ENCODE measurements at regions of chr16 and their contacts with region 1.

Region 1: GRCh38 chr16:18853694-18854093 is 52.3 kb upstream of the ARL6IP1 start:
- DNase-seq: no peak
- ATAC-seq: no peak
- H3K4me3 ChIP-seq: no peak overlapping the region
- H3K27ac ChIP-seq: peak overlapping the region in 2 of 4 donors; percentile 42 to 63
- H3K4me1 ChIP-seq: peaks cover 0 to 7% of the 10 kb centered on the region in 2 donors
- H3K27me3 ChIP-seq: no peaks in the 10 kb centered on the region
- CTCF ChIP-seq: no peak
- POLR2A ChIP-seq: no peak

Region 2: DNA sequence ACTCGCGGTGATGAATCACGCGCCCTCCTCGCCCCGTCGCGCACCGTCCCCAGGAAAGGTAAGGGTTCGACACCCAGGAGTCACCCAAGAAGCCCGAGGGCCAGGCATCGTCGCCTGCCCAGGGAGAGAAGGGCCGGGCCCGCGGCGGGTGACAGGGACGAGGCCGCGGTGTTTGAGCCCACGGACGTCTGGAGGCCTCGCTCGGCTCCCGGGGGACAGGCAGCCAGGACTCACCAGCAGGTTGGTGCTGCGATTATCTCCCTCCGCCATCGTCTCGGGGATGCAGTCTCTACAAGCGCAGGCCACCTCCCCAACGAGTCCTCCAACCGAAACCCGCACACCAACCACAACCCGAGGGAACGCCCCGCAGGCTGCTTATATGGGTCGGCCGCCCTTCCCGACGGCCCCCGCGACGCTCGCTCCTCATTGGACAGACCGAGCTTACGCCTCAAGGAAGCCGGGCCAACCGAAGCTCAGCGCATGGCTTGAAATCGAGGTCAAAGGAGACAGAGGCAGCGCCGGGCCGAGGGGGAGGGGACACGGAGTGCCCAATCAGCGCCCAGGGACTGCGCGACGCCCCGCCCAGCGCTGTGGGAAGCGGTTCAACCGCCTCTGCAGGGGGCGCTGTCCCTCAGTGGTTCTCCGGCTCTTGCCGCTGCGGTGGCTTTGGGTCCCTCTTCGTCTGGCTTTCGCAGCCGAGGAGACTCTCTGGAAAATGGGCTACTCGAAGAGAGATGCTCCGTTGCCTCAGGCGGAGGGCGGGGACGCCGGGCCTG is 52.3 kb before region 1 on chr16 and contains the start of gene ARL6IP1:
- in situ Hi-C with region 1: no loop called
- intact Hi-C with region 1: no loop called
- DNase-seq: peak; percentile 99 to 100
- ATAC-seq: peak; percentile 93
- H3K4me3 ChIP-seq: peak within 1 kb of the TSS; percentile 91 to 96 (median 94)
- H3K27ac ChIP-seq: peak within 1 kb of the TSS; percentile 90 to 96 (median 94)
- H3K4me1 ChIP-seq: peaks cover 53 to 64% of the 10 kb centered on the region in 2 donors
- H3K27me3 ChIP-seq: no peaks in the 10 kb centered on the region
- CTCF ChIP-seq: peak; percentile 90 to 94 (median 92)
- POLR2A ChIP-seq: peak; percentile 99 to 100
- total RNA-seq, gene ARL6IP1: 25.2 to 40.5 (median 37.5) TPM

Region 3: DNA sequence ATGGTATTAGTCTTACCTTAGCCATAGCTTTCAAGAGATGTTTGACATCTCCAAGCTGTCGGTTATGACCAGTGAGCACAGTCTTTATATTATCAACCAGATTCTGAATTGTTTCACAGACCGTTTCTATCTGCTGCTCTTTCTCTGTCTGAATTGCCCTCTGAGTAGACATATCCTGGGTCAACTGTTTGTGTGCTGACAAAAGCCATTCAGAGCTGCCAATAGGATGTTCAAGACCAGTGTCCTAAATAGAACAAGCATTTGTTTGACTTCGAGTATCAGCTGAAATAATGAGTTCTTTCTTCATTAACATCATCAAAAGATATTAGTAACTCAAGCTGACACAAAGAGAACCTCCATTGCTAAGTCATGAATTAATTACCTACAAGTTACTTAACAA is 37.4 kb before region 1 on chr16:
- in situ Hi-C with region 1: no loop called
- intact Hi-C with region 1: loop called (anchors 5 kb)
- DNase-seq: no peak
- ATAC-seq: no peak
- H3K4me3 ChIP-seq: no peak overlapping the region
- H3K27ac ChIP-seq: peak overlapping the region; percentile 63 to 71 (median 65)
- H3K4me1 ChIP-seq: peaks cover 30 to 31% of the 10 kb centered on the region in 2 donors
- H3K27me3 ChIP-seq: no peaks in the 10 kb centered on the region
- CTCF ChIP-seq: no peak
- POLR2A ChIP-seq: no peak

Region 4: GRCh38 chr16:18945233-18945632 is 91.5 kb after region 1 on chr16:
- in situ Hi-C with region 1: no loop called
- intact Hi-C with region 1: no loop called
- DNase-seq: no peak
- ATAC-seq: no peak
- H3K4me3 ChIP-seq: no peak overlapping the region
- H3K27ac ChIP-seq: no peak overlapping the region
- H3K4me1 ChIP-seq: no peaks in the 10 kb centered on the region
- H3K27me3 ChIP-seq: no peaks in the 10 kb centered on the region
- CTCF ChIP-seq: no peak
- POLR2A ChIP-seq: no peak

Region 5: DNA sequence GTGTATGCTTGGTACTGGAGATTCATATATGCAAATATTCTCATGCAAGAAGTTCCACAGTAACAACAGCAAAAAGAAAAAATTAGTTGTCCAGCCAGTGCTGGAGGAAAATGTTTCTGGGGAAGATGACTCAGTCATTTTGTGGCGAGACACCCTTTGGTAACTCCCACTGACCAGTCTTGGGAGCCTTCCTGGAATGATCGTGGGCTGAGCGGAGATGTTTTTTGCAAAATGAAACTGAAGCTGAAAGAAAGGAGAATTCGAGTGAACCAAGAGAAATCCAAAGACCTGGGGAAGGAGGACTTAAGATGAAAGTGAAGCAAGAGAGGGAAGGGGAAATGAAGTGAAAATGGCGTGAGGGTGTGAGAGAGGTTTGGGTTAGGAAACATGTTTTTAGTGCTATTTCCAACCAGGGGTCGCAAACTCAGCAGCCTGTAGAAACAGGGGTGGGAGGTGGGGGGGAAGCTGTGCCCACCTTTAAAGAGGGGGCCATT is 265.3 kb after region 1 on chr16:
- in situ Hi-C with region 1: no loop called
- intact Hi-C with region 1: no loop called
- DNase-seq: peak in 1 of 2 donors; percentile 35
- ATAC-seq: peak; percentile 49 to 51
- H3K4me3 ChIP-seq: peak overlapping the region; percentile 21 to 38 (median 34)
- H3K27ac ChIP-seq: peak overlapping the region; percentile 52 to 94 (median 70)
- H3K4me1 ChIP-seq: peaks cover 54 to 56% of the 10 kb centered on the region in 2 donors
- H3K27me3 ChIP-seq: no peaks in the 10 kb centered on the region
- CTCF ChIP-seq: no peak
- POLR2A ChIP-seq: no peak

Measured in gastrocnemius medialis (tissue), 4 donors.